OCI-LY7 (cell line): ENCODE measurements at regions of chr16 and their contacts with region 1.

Region 1: GRCh38 chr16:85717393-85718121 is 28.8 kb upstream of the GINS2 start:
- DNase-seq: peak; percentile 84
- H3K4me3 ChIP-seq: no peak overlapping the region
- H3K27ac ChIP-seq: no peak overlapping the region
- H3K4me1 ChIP-seq: peaks cover 8% of the 10 kb centered on the region
- CTCF ChIP-seq: peak; percentile 88

Region 2: DNA sequence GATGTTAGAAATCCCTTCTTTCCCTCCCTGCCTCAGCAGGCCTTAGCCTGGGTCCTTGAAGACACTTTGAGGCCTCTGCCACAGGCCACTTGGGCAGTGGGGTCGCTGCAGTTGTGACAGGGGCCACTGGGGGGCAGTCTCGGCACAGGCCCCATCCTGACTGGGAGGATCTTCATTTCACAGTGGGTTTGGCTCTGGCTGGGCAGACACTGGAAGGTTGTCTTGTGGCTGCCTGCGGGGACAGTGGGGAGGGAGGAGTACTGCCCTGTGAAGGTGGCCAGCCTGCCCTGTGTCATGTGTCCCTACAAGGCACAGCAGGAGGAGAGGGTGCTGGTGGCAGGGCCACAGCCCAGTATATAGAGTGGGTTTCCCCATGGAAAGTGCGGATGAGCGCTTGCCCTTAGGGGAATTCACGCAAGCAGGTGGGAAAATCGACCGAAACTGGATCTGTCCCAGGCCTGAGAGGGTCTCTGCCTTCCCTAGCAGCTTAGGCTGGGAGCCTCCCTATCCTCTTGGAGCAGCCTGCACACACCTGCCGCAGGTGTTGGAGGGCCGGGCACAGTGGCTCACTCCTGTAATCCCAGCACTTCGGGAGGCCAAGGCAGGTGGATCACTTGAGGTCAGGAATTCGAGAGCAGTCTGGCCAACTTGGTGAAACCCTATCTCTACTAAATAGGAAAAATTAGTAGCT is 57.6 kb before region 1 on chr16:
- CTCF ChIA-PET with region 1: interaction called, 7 read pairs
- POLR2A ChIA-PET with region 1: no interaction called
- intact Hi-C with region 1: loop called (anchors 1 kb)
- DNase-seq: peak; percentile 69
- H3K4me3 ChIP-seq: no peak overlapping the region
- H3K27ac ChIP-seq: no peak overlapping the region
- H3K4me1 ChIP-seq: no peaks in the 10 kb centered on the region
- CTCF ChIP-seq: peak; percentile 95

Region 3: DNA sequence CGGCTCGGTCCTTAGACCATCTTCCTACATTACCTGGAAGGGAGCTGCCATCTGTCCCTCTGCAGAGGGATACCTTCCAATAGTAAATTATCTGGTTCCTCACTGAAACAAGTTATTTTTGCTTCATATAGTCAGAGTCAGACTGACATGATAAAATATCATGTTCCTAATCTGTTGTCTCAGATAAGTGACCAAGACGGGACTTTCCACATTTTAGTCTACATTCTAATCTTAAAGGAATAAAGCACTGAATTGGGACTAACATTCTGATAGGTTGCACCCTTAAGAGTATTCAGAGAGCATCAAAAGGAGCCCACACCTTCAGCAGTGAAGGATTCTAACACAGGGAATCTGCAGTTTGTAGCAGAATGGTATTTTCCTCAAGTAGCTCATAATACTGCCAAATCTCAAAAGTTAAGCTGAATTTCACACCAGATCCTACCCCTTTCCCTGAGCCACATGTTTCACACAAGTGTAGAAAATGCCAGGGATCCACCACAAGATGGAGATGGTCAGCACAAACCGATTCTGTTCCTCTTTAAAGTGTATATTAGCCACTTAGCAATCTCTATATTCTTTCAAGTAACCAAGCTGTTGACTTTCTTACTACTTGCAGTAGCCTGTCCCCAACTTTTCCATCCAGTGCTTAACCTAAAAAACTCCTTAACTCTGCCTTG is 42.2 kb before region 1 on chr16:
- CTCF ChIA-PET with region 1: interaction called, 16 read pairs
- POLR2A ChIA-PET with region 1: interaction called, 3 read pairs
- intact Hi-C with region 1: loop called (anchors 5 kb)
- DNase-seq: peak; percentile 43
- H3K4me3 ChIP-seq: no peak overlapping the region
- H3K27ac ChIP-seq: no peak overlapping the region
- H3K4me1 ChIP-seq: no peaks in the 10 kb centered on the region
- CTCF ChIP-seq: peak; percentile 75

Region 4: GRCh38 chr16:85688586-85689284 is 28.8 kb before region 1 on chr16 and contains the start of gene GINS2:
- CTCF ChIA-PET with region 1: interaction called, 3 read pairs
- POLR2A ChIA-PET with region 1: interaction called, 12 read pairs
- intact Hi-C with region 1: loop called (anchors 1 kb)
- DNase-seq: peak; percentile 97
- H3K4me3 ChIP-seq: peak within 1 kb of the TSS; percentile 87
- H3K27ac ChIP-seq: peak within 1 kb of the TSS; percentile 90
- H3K4me1 ChIP-seq: peaks cover 50% of the 10 kb centered on the region
- CTCF ChIP-seq: no peak
- total RNA-seq, gene GINS2: 74.3 and 80.9 TPM in 2 replicates

Region 5: DNA sequence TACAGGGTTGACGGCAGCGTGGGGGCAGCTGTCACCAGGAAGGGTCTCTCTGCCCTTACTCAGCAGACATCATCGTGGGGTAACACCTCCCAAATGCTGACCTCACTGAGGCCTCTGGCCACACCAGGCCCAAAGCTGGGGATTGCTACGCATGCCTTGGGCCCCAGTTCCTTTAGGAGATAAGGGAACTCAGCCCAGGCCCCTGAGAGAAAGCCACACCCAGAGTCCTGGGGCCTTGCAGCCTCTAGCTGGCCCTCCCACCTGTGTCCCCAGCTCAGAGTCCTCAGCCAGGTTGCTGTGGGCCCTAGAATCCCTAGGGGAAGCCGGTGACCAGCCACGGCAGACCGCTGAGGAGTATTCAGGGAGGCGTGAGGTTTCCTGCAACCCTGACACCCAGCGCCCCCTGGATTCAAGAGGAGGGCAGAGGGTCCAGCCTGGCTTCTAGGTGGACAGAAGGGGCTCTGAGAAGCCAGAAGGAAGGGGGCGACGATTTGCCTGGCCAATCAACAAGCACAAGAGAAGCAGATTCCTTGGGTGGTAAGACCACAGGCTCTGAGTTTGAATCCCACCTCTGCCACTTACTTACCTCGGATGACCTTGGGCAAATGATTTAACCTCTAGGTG is 18.5 kb before region 1 on chr16:
- CTCF ChIA-PET with region 1: no interaction called
- POLR2A ChIA-PET with region 1: no interaction called
- intact Hi-C with region 1: no loop called
- DNase-seq: no peak
- H3K4me3 ChIP-seq: no peak overlapping the region
- H3K27ac ChIP-seq: no peak overlapping the region
- H3K4me1 ChIP-seq: peaks cover 8% of the 10 kb centered on the region
- CTCF ChIP-seq: no peak

Region 6: DNA sequence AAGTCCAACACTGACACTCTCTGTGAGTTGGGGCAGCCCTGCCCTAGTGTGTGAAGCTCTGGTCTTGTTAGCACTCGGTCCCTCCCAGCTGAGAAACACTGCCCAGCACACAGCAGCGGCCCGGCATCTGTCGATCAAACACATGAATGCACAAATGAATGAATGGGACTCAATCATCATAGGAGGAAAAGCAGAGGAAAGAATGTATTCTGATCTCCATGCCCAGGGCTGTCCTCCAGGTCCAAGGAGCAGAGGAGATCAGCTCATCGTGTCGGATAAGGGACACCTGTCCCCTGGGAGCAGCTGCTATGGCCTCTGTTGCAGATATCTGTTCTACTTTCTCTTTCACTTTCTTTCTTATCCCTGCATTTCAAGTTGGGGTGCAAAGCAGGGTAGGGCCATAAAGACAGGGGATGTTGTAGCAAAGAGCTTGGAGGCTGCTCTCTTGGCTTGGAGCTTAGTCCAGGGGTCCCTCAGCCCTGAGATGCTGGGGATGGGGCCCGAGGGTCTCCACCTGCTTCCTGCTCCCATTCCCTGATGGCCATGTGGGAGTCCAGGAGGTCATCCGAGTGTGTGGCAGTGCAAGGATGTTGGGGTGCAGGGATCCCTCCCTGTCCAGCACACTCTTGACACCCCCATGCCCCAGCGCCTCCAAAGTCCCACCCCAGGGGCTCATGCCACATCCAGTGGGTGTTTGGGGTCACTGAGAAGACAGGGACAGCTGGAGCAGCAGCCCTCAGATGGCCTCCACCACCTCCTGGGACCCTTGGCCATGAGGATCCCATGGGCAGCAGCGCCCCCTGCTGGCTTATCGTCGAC is 269.6 kb after region 1 on chr16:
- CTCF ChIA-PET with region 1: no interaction called
- POLR2A ChIA-PET with region 1: no interaction called
- intact Hi-C with region 1: no loop called
- DNase-seq: peak; percentile 71
- H3K4me3 ChIP-seq: no peak overlapping the region
- H3K27ac ChIP-seq: no peak overlapping the region
- H3K4me1 ChIP-seq: peaks cover 56% of the 10 kb centered on the region
- CTCF ChIP-seq: peak; percentile 59